CD4-positive, alpha-beta memory T cell (primary cell): ENCODE measurements at regions of chr7 and their contacts with region 1.

Region 1: DNA sequence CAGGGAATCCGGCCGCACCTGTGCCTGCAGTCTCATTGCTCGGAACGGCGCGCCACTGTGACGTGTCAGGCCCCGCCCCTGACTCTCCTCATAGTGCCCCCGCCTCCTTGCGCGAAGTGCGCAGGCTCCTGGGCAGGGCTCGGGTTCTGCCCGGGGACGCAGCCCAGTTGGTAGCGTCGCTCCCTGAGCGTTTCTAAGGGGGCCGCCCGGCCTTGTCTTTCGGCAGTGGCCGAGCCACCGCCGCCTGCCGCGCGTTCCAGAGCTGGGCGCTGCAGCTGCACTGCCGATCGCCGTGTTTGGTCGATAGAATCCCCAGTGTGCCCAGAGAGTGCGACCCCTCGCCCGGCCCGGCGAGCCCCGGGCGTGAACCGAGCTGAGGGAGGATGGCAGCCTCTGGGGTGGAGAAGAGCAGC is at the start of gene KLHL7:
- DNase-seq: peak; percentile 91 to 96 (median 93)
- H3K4me3 ChIP-seq: peak within 1 kb of the TSS; percentile 83 to 98
- H3K4me3 Mint-ChIP-seq: peak within 1 kb of the TSS; percentile 93 to 99 (median 97)
- H3K27ac ChIP-seq: peak within 1 kb of the TSS; percentile 89
- H3K27ac Mint-ChIP-seq: peak within 1 kb of the TSS; percentile 93 to 98 (median 96)
- H3K4me1 ChIP-seq: peaks cover 39% of the 10 kb centered on the region
- H3K4me1 Mint-ChIP-seq: peaks cover 28 to 56% (median 38%) of the 10 kb centered on the region in 4 donors
- H3K27me3 ChIP-seq: no peaks in the 10 kb centered on the region
- H3K27me3 Mint-ChIP-seq: no peaks in the 10 kb centered on the region
- total RNA-seq, gene KLHL7: 22.5 to 25.6 TPM

Region 2: DNA sequence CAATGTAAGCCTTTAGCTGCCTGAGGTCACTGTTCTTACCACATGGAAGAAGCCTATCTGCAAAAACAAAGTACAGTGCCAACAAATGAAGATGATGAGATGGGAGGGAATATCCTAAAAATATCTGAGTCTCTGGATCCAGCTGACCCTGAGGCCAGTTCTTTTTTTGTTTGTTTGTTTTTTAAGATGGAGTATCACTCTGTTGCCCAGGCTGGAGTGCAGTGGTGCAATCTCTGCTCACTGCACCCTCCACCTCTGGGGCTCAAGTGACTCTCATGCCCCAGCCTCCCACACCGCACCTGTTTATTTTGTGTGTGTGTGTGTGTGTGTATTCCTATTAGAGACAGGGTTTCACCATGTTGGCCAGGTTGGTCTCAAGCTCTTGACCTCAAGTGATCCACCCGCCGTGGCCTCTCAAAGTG is 136.6 kb before region 1 on chr7:
- CTCF ChIA-PET with region 1: no interaction called
- POLR2A ChIA-PET with region 1: no interaction called
- intact Hi-C with region 1: no loop called
- DNase-seq: no peak
- H3K4me3 ChIP-seq: no peak overlapping the region
- H3K4me3 Mint-ChIP-seq: no peak overlapping the region
- H3K27ac ChIP-seq: no peak overlapping the region
- H3K27ac Mint-ChIP-seq: no peak overlapping the region
- H3K4me1 ChIP-seq: no peaks in the 10 kb centered on the region
- H3K4me1 Mint-ChIP-seq: no peaks in the 10 kb centered on the region
- H3K27me3 ChIP-seq: no peaks in the 10 kb centered on the region
- H3K27me3 Mint-ChIP-seq: no peaks in the 10 kb centered on the region

Region 3: GRCh38 chr7:23181684-23182553 is 76.3 kb after region 1 on chr7 and contains the start of gene NUP42:
- CTCF ChIA-PET with region 1: interaction called, 20 read pairs
- POLR2A ChIA-PET with region 1: interaction called, 49 read pairs
- intact Hi-C with region 1: loop called (anchors 1 kb)
- DNase-seq: peak; percentile 93 to 96 (median 95)
- H3K4me3 ChIP-seq: peak within 1 kb of the TSS; percentile 95 to 98
- H3K4me3 Mint-ChIP-seq: peak within 1 kb of the TSS; percentile 94 to 100 (median 98)
- H3K27ac ChIP-seq: peak within 1 kb of the TSS; percentile 90
- H3K27ac Mint-ChIP-seq: peak within 1 kb of the TSS; percentile 96 to 100 (median 99)
- H3K4me1 ChIP-seq: peaks cover 38% of the 10 kb centered on the region
- H3K4me1 Mint-ChIP-seq: peaks cover 24 to 43% (median 27%) of the 10 kb centered on the region in 4 donors
- H3K27me3 ChIP-seq: no peaks in the 10 kb centered on the region
- H3K27me3 Mint-ChIP-seq: peaks cover 0 to 2% of the 10 kb centered on the region in 2 donors
- total RNA-seq, gene NUP42: 33.3 to 37.8 TPM